Stomach (tissue), 19 donors: ENCODE measurements at regions of chr3 and their contacts with region 1.

Region 1: DNA sequence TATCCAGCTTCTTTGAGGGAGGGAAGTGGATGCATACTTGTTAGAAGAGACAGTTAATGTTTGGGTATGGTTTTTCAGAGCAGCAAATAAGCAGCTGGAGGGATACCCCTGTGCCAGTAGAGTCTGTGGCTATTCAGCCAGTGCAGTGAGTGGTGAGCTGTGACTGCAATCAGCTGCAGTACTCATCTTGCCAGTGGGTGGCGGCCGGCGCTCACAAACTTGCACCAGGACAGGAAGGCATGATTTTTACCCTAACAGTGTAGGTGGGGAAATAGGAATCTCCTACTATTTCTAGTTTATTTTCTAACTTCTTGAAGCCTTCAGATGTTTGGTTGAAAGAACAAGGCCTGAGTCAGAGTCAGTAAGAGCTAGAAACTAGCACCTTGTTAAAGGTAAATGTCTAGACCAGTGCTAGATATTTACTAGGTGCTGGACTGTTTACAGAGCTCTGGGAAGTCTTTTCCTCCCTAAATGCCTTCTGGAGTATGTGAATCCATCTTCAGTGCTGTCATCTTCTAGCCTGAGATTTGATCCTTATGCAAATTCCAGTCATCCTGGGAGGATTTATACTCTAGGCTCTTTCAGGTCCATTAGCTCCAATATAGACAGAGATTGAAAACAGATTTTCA is 23.6 kb downstream of the TIMP4 start:
- DNase-seq: peak; percentile 81 to 88
- H3K4me3 ChIP-seq: no peak overlapping the region
- H3K27ac ChIP-seq: no peak overlapping the region
- H3K4me1 ChIP-seq: peaks cover 0 to 24% (median 4%) of the 10 kb centered on the region in 4 donors
- H3K27me3 ChIP-seq: no peaks in the 10 kb centered on the region
- CTCF ChIP-seq: peak in 5 of 7 experiments; percentile 81 to 88 (median 85)
- EP300 ChIP-seq: no peak
- POLR2A ChIP-seq: no peak

Region 2: DNA sequence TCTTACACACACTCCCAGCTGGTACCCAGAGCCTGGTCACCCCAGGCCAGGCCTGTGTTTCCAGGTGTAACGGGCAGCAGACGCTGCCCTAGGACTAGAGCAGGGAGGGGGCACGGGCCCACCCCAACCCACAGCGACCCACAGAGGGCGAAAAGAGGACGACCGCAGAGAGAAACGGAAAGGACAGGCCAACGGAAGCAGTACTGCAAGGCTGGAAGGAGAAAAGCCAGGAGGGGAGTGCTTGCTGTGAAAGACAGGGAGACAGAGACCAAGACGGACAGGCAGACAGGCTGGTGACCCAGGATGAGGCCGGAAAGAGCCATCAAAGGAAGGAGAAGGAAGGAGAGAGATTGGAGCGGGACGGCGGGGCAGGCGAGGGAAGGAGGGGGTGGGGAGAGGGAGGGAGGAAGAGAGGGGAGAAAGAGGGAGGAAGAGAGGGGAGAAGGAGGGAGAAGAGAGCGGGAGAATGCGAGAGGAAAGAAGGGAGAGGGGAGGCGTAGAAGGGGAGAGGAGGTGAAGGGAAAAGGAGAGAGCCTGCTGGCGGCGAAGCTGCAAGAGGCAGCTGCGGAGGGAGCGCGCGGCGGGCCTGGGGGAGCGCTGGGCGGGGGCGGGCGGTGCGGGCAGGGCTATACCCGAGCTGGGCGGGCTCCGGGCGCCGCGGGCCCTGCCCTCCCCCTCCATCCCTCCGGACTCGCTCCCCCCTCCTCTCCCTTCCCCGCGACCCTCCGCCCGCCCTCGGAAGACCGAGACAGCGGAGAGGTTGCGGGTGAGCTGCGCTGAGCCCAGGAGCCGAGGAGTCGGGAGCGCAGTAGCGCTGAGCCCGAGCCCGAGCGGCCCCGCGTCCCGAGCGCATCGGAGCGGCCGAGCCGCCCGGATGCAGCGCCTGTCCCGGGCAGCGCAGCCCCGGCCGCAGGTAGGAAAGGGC is 1142.9 kb before region 1 on chr3 and contains the start of gene SLC6A1:
- intact Hi-C with region 1: no loop called
- DNase-seq: peak in 1 of 2 donors; percentile 68
- H3K4me3 ChIP-seq: peak within 1 kb of the TSS; percentile 30 to 42 (median 40)
- H3K27ac ChIP-seq: peak within 1 kb of the TSS in 1 of 5 donors; percentile 8
- H3K4me1 ChIP-seq: peaks cover 0 to 19% (median 14%) of the 10 kb centered on the region in 4 donors
- H3K27me3 ChIP-seq: peaks cover 8 to 79% (median 51%) of the 10 kb centered on the region in 3 donors
- CTCF ChIP-seq: no peak
- EP300 ChIP-seq: no peak
- POLR2A ChIP-seq: no peak
- total RNA-seq, gene SLC6A1: 0.29 to 2.8 TPM in 2 of 5 donors, not detected in the others

Region 3: GRCh38 chr3:12170207-12170606 is 35.1 kb after region 1 on chr3:
- intact Hi-C with region 1: loop called (anchors 5 kb)
- DNase-seq: no peak
- H3K4me3 ChIP-seq: no peak overlapping the region
- H3K27ac ChIP-seq: peak overlapping the region in 1 of 5 donors; percentile 31
- H3K4me1 ChIP-seq: no peaks in the 10 kb centered on the region
- H3K27me3 ChIP-seq: no peaks in the 10 kb centered on the region
- CTCF ChIP-seq: no peak
- EP300 ChIP-seq: no peak
- POLR2A ChIP-seq: no peak

Region 4: DNA sequence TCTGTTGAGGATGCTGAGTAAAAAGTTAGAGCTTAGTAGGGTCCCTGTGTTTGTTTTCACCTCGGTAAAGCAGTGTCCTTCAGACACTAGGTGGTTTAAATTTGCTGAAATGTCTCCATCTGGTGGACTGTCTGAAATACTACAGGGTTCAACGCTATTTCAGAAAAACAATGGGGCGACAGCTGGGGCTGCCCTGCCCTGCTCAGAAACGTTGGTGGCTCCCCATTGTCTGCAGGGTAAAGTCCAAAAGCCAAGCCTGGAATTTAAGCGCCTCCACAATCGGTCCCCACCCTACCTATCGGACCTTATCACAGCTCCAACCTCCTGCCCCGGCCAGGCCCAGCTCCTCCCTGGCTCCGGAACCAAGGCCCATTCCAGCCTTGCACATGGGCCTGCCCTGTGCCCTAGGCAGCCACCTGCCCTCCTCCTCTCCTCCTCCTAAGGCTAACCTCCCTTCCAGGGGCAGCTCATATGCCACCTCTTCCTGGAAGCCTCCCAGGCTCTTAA is 344.8 kb after region 1 on chr3:
- intact Hi-C with region 1: loop called (anchors 5 kb)
- DNase-seq: peak; percentile 78 to 90
- H3K4me3 ChIP-seq: no peak overlapping the region
- H3K27ac ChIP-seq: peak overlapping the region in 4 of 5 donors; percentile 34 to 67 (median 66)
- H3K4me1 ChIP-seq: peaks cover 18 to 50% (median 38%) of the 10 kb centered on the region in 4 donors
- H3K27me3 ChIP-seq: no peaks in the 10 kb centered on the region
- CTCF ChIP-seq: peak in 5 of 7 experiments; percentile 61 to 92 (median 80)
- EP300 ChIP-seq: no peak
- POLR2A ChIP-seq: no peak